ENCODE measurements at regions of chr4 and their contacts with region 1.

Region 1: GRCh38 chr4:42519803-42520417 is 122.6 kb downstream of the SHISA3 start:
- DNase-seq: no peak
- H3K4me3 ChIP-seq: no peak overlapping the region
- H3K27ac ChIP-seq: no peak overlapping the region
- H3K4me1 ChIP-seq: peaks cover 0 to 10% (median 7%) of the 10 kb centered on the region in 4 donors
- H3K27me3 ChIP-seq: no peaks in the 10 kb centered on the region
- CTCF ChIP-seq: peak; percentile 64 to 68 (median 65)
- EP300 ChIP-seq: no peak
- POLR2A ChIP-seq: no peak

Region 2: DNA sequence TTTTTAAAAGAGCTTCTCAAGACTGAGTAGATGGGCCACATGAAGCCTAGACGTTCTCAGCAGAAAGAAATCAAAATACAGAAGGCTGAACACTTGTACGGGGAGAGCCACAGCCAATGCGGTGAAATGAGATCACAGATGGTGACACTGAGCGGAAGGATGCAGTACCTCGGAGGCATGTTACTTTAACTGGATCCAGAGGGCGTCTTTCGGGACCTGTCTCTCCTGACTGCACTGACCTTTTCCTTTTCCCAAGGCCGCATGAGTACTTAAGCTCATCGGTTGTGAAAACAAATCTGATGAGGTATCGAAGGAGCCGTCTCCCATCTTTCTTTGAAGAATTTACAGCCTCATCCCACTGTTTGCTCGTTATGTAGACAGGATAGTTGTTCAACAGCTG is 400.0 kb before region 1 on chr4:
- intact Hi-C with region 1: no loop called
- DNase-seq: no peak
- H3K4me3 ChIP-seq: no peak overlapping the region
- H3K27ac ChIP-seq: no peak overlapping the region
- H3K4me1 ChIP-seq: no peaks in the 10 kb centered on the region
- H3K27me3 ChIP-seq: no peaks in the 10 kb centered on the region
- CTCF ChIP-seq: no peak
- EP300 ChIP-seq: no peak
- POLR2A ChIP-seq: no peak

Region 3: DNA sequence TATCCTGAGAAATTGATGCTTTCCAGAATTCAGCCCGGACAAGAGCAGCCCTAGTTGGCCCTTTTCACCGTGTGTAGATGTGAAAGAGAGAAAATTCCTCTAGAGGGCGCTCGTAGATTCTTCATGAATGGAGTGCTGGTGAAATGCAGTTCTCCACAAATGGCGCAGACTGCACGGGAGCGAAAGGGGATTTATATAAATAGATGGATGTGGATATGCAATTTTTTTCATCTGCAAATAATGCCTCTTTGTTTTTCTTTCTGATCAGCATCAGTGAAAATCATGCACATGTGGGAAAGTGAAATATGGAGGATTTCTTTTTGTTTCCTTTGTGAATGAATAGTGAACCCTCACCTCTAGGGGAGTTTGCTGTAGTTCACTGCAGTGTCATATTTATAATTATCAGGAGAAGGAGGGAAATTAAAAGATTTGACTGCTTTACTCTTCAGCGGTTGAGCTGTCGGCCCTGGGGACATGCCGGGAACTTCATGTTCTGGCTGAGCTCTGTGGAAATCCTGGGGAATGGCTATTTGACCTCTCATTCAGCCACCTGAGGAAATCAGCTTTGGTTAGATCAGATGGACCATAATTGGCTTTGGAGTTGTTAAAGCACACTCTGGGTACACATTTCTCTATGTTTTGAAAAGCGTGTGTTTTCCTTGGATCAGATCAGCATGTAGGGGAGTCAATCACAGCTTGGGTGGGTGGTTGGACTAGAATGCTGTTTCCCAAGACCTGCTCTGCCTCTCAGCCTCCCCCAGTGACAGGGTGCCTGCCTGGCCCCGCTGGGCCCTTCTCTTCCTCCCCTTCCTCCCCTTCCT is 237.6 kb before region 1 on chr4:
- intact Hi-C with region 1: loop called (anchors 1 kb)
- DNase-seq: no peak
- H3K4me3 ChIP-seq: no peak overlapping the region
- H3K27ac ChIP-seq: peak overlapping the region in 1 of 4 donors; percentile 14
- H3K4me1 ChIP-seq: peaks cover 0 to 11% (median 8%) of the 10 kb centered on the region in 4 donors
- H3K27me3 ChIP-seq: no peaks in the 10 kb centered on the region
- CTCF ChIP-seq: peak; percentile 61 to 71 (median 65)
- EP300 ChIP-seq: no peak
- POLR2A ChIP-seq: no peak

Region 4: GRCh38 chr4:42396752-42397634 is 122.9 kb before region 1 on chr4 and contains the start of gene SHISA3:
- intact Hi-C with region 1: loop called (anchors 10 kb)
- DNase-seq: no peak
- H3K4me3 ChIP-seq: peak within 1 kb of the TSS; percentile 56 to 64 (median 60)
- H3K27ac ChIP-seq: peak within 1 kb of the TSS; percentile 34 to 76 (median 71)
- H3K4me1 ChIP-seq: peaks cover 11 to 31% (median 29%) of the 10 kb centered on the region in 4 donors
- H3K27me3 ChIP-seq: peaks cover 0 to 61% (median 18%) of the 10 kb centered on the region in 4 donors
- CTCF ChIP-seq: no peak
- EP300 ChIP-seq: no peak
- POLR2A ChIP-seq: no peak
- total RNA-seq, gene SHISA3: 9.1 to 38.6 (median 19.8) TPM

Region 5: DNA sequence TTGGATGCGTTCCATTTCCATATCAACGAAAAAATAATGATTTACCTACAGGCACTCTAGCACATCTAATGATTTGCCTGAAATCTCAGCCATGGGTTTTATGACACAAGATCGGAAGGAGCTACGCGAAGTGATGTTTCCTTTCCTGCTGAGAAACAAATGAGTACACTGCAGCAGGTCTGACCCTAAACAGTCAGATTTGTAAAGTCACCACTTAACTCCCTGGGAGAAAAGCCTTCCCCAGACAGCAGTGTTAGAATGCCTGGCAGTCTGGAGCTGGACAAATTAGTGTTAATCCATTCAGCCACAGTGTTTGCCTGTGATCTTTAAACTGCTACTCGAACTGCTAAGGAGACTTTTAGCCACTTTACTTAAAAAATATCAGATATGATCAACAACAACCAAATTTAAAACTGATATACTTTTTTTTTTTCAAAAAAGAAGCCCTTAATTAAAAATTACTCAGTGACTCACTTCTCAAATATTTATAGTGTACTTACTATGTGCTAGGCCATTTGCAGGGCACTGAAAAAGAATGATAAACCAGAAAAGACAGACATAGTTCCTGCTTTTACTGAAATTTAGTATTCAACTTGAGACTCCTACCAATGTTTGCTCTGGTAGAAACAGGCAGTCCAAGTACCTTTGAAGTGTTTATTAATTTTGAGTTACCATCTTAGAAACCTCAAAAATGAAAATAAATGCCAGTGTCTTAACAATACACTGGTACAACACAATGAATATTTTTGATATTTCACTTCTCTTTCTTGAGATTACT is 18.1 kb before region 1 on chr4:
- intact Hi-C with region 1: no loop called
- DNase-seq: no peak
- H3K4me3 ChIP-seq: no peak overlapping the region
- H3K27ac ChIP-seq: no peak overlapping the region
- H3K4me1 ChIP-seq: peaks cover 0 to 12% (median 4%) of the 10 kb centered on the region in 4 donors
- H3K27me3 ChIP-seq: no peaks in the 10 kb centered on the region
- CTCF ChIP-seq: no peak
- EP300 ChIP-seq: no peak
- POLR2A ChIP-seq: no peak

Region 6: GRCh38 chr4:42570221-42570620 is 50.3 kb after region 1 on chr4:
- intact Hi-C with region 1: no loop called
- DNase-seq: no peak
- H3K4me3 ChIP-seq: no peak overlapping the region
- H3K27ac ChIP-seq: no peak overlapping the region
- H3K4me1 ChIP-seq: peaks cover 6 to 9% (median 9%) of the 10 kb centered on the region in 4 donors
- H3K27me3 ChIP-seq: no peaks in the 10 kb centered on the region
- CTCF ChIP-seq: no peak
- EP300 ChIP-seq: no peak
- POLR2A ChIP-seq: no peak

Region 7: DNA sequence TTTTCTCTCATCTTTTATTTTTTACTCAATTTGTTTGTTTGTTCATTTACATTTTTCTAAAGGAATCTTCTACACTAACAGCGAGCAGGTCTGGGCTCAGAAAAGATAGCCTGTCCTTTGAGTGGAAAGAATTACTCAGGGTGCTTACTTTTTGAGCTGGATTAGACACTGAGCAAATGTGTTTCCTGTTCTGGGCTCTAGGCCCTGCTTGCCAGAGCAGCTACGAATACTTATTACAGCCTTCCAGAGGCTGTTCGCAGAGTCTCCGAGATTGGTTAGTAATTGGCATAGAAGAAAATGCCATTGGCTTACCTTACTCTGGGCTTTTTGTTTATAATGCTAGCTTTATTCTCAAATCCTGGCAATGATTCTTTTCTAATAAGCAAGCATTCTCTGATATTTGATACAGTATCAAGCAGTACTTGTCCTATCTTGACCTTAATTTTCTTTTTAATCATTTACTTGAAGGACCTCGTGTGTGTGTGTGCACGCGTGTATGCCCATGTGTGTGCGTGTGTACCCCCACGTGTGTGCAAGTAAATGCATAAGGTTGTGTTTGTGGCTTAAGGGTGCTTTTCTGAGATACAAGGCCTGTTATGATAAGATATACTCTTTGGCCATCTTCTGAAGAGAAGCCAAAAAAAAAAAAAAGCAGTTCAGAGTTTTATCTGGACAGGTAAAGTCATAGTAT is 296.4 kb after region 1 on chr4:
- intact Hi-C with region 1: no loop called
- DNase-seq: no peak
- H3K4me3 ChIP-seq: no peak overlapping the region
- H3K27ac ChIP-seq: no peak overlapping the region
- H3K4me1 ChIP-seq: no peaks in the 10 kb centered on the region
- H3K27me3 ChIP-seq: no peaks in the 10 kb centered on the region
- CTCF ChIP-seq: no peak
- EP300 ChIP-seq: no peak
- POLR2A ChIP-seq: no peak